Naive thymus-derived CD4-positive, alpha-beta T cell (primary cell): ENCODE measurements at regions of chr18 and their contacts with region 1.

Region 1: GRCh38 chr18:70621710-70622109 is 332.9 kb downstream of the SOCS6 start:
- DNase-seq: peak in 7 of 9 donors; percentile 19 to 53 (median 47)
- ATAC-seq: peak; percentile 79
- H3K4me3 ChIP-seq: peak overlapping the region; percentile 45
- H3K4me3 Mint-ChIP-seq: peak overlapping the region; percentile 82 to 93 (median 87)
- H3K27ac ChIP-seq: peak overlapping the region; percentile 77
- H3K27ac Mint-ChIP-seq: peak overlapping the region; percentile 84 to 100 (median 98)
- H3K4me1 ChIP-seq: peaks cover 0 to 71% of the 10 kb centered on the region in 2 donors
- H3K4me1 Mint-ChIP-seq: peaks cover 19 to 85% (median 72%) of the 10 kb centered on the region in 7 donors
- H3K27me3 ChIP-seq: no peaks in the 10 kb centered on the region
- H3K27me3 Mint-ChIP-seq: no peaks in the 10 kb centered on the region

Region 2: GRCh38 chr18:70636991-70637390 is 15.3 kb after region 1 on chr18:
- CTCF ChIA-PET with region 1: interaction called, 8 read pairs
- POLR2A ChIA-PET with region 1: interaction called, 6 read pairs
- intact Hi-C with region 1: loop called in 1 of 2 experiments (anchors 2 kb)
- DNase-seq: no peak
- ATAC-seq: no peak
- H3K4me3 ChIP-seq: no peak overlapping the region
- H3K4me3 Mint-ChIP-seq: no peak overlapping the region
- H3K27ac ChIP-seq: no peak overlapping the region
- H3K27ac Mint-ChIP-seq: peak overlapping the region in 3 of 9 donors; percentile 6 to 81 (median 46)
- H3K4me1 ChIP-seq: peaks cover 0 to 13% of the 10 kb centered on the region in 2 donors
- H3K4me1 Mint-ChIP-seq: peaks cover 0 to 40% (median 36%) of the 10 kb centered on the region in 7 donors
- H3K27me3 ChIP-seq: no peaks in the 10 kb centered on the region
- H3K27me3 Mint-ChIP-seq: no peaks in the 10 kb centered on the region

Region 3: GRCh38 chr18:70659036-70659925 is 37.6 kb after region 1 on chr18:
- CTCF ChIA-PET with region 1: interaction called, 25 read pairs
- POLR2A ChIA-PET with region 1: interaction called, 81 read pairs
- intact Hi-C with region 1: loop called in 1 of 2 experiments (anchors 1 kb)
- DNase-seq: peak in 8 of 9 donors; percentile 13 to 88 (median 86)
- ATAC-seq: peak; percentile 97
- H3K4me3 ChIP-seq: no peak overlapping the region
- H3K4me3 Mint-ChIP-seq: peak overlapping the region in 9 of 10 donors; percentile 43 to 80 (median 71)
- H3K27ac ChIP-seq: peak overlapping the region; percentile 77
- H3K27ac Mint-ChIP-seq: peak overlapping the region in 8 of 9 donors; percentile 93 to 99 (median 97)
- H3K4me1 ChIP-seq: peaks cover 0 to 62% of the 10 kb centered on the region in 2 donors
- H3K4me1 Mint-ChIP-seq: peaks cover 17 to 82% (median 66%) of the 10 kb centered on the region in 7 donors
- H3K27me3 ChIP-seq: no peaks in the 10 kb centered on the region
- H3K27me3 Mint-ChIP-seq: no peaks in the 10 kb centered on the region

Region 4: GRCh38 chr18:70671889-70672565 is 50.3 kb after region 1 on chr18:
- CTCF ChIA-PET with region 1: interaction called, 19 read pairs
- POLR2A ChIA-PET with region 1: interaction called, 70 read pairs
- intact Hi-C with region 1: loop called in 1 of 2 experiments (anchors 1 kb)
- DNase-seq: peak in 2 of 9 donors; percentile 49 to 58
- ATAC-seq: peak; percentile 50
- H3K4me3 ChIP-seq: no peak overlapping the region
- H3K4me3 Mint-ChIP-seq: peak overlapping the region in 8 of 10 donors; percentile 1 to 66 (median 37)
- H3K27ac ChIP-seq: peak overlapping the region; percentile 74
- H3K27ac Mint-ChIP-seq: peak overlapping the region in 8 of 9 donors; percentile 89 to 98 (median 94)
- H3K4me1 ChIP-seq: peaks cover 3 to 52% of the 10 kb centered on the region in 2 donors
- H3K4me1 Mint-ChIP-seq: peaks cover 11 to 68% (median 59%) of the 10 kb centered on the region in 7 donors
- H3K27me3 ChIP-seq: no peaks in the 10 kb centered on the region
- H3K27me3 Mint-ChIP-seq: no peaks in the 10 kb centered on the region

Region 5: DNA sequence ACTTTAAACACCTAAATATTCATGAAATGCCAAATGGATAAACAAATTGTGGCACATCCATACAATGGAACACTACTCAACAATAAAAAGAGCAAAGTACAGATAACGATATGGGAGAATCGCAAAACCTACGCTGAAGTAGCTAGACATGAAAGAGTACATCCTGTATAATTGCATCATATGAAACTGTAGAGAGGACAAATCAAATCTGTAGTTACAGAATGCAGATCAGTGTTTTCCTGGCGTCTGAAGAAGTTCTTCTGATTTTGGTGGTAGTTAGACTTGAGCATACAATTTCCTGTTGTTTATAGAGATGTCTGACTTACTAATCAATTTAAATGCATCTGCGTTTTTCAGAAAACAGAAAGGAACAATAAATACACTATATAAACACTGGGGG is 61.6 kb after region 1 on chr18:
- CTCF ChIA-PET with region 1: no interaction called
- POLR2A ChIA-PET with region 1: interaction called, 22 read pairs
- intact Hi-C with region 1: no loop called
- DNase-seq: peak in 7 of 9 donors; percentile 39 to 78 (median 70)
- ATAC-seq: peak; percentile 94
- H3K4me3 ChIP-seq: no peak overlapping the region
- H3K4me3 Mint-ChIP-seq: peak overlapping the region in 9 of 10 donors; percentile 6 to 65 (median 30)
- H3K27ac ChIP-seq: peak overlapping the region; percentile 65
- H3K27ac Mint-ChIP-seq: peak overlapping the region in 8 of 9 donors; percentile 80 to 97 (median 89)
- H3K4me1 ChIP-seq: peaks cover 0 to 15% of the 10 kb centered on the region in 2 donors
- H3K4me1 Mint-ChIP-seq: peaks cover 4 to 37% (median 30%) of the 10 kb centered on the region in 7 donors
- H3K27me3 ChIP-seq: no peaks in the 10 kb centered on the region
- H3K27me3 Mint-ChIP-seq: no peaks in the 10 kb centered on the region

Region 6: DNA sequence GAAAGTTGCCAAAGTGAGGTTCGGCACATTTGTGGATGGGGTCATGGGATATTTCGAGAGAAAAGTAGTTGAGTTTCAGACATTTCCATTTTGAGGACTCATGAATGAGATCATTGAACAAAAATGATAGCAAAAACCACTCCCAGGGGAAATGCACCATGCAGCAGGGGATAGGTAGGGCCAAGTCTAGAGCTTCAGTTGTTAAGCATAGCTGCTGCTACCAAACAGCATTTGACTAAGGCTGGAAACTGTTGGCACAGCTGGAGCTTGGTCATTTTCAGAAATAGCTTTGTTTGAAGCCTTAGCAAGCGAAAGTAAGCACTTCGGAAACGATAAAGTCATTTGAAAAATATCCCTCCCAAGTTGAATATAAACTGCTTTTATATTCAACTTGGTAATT is 98.9 kb after region 1 on chr18:
- CTCF ChIA-PET with region 1: no interaction called
- POLR2A ChIA-PET with region 1: interaction called, 3 read pairs
- intact Hi-C with region 1: loop called in 1 of 2 experiments (anchors 5 kb)
- DNase-seq: no peak
- ATAC-seq: no peak
- H3K4me3 ChIP-seq: no peak overlapping the region
- H3K4me3 Mint-ChIP-seq: no peak overlapping the region
- H3K27ac ChIP-seq: no peak overlapping the region
- H3K27ac Mint-ChIP-seq: no peak overlapping the region
- H3K4me1 ChIP-seq: no peaks in the 10 kb centered on the region
- H3K4me1 Mint-ChIP-seq: peaks cover 0 to 8% (median 0%) of the 10 kb centered on the region in 7 donors
- H3K27me3 ChIP-seq: no peaks in the 10 kb centered on the region
- H3K27me3 Mint-ChIP-seq: no peaks in the 10 kb centered on the region